GM10248 (cell line): ENCODE measurements at regions of chr9 and their contacts with region 1.

Region 1: GRCh38 chr9:127869310-127870152 is 7.9 kb downstream of the AK1 start:
- DNase-seq: peak; percentile 94
- CTCF ChIP-seq: peak; percentile 96

Region 2: DNA sequence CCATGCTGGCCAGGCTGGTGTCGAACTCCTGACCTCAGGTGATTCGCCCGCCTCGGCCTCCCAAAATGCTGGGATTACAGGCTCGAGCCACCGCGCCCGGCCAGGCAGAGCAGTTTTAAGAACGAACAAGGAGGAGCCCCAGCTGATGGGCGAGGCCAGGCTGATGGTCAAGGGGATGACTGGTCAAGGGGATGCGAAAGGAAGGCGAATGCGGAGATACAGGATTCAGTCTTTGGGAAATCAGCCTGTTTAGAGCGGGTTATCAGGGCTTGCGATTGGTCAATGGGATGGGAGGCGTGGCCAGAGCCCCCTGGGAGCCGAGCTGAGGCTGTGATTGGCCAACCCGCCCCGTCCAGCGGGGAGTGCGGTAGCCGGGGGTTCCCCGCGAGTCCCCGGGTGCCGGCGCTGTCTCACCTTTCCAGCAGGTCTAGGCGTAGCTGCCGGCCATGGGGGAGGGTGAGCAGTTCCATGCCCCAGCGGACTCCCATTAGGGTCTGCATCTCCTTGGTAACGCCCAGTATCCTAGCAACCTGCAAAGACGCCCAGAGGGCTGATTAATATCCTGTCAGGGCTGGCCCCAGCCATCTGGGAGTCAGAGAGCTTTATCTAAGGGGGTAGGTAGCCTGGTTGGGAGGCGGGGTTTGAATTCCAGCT is 127.0 kb before region 1 on chr9:
- CTCF ChIA-PET with region 1: interaction called, 17 read pairs
- POLR2A ChIA-PET with region 1: no interaction called
- DNase-seq: no peak
- CTCF ChIP-seq: no peak

Region 3: GRCh38 chr9:127779136-127779981 is 90.2 kb before region 1 on chr9:
- CTCF ChIA-PET with region 1: interaction called, 12 read pairs
- POLR2A ChIA-PET with region 1: no interaction called
- DNase-seq: peak; percentile 64
- CTCF ChIP-seq: no peak

Region 4: DNA sequence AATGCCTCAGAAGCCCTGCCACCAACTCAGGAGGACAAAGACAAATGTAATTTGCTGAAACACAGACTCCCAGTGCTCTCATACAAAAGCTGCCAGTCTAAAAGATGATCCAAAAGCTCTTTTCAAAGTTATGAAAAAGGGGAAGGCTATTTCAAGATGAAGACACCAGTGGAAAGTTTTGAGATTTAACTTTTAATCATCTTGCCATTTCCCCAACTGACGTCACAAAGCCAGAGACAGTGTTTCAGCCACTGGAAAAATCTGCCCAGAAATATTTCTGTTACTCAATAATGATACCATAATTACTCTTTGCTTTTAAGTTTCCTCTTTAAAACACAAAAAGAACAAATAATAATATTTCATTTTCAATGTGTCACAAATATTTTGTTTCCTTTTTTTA is 36.0 kb before region 1 on chr9:
- CTCF ChIA-PET with region 1: interaction called, 13 read pairs
- POLR2A ChIA-PET with region 1: no interaction called
- DNase-seq: no peak
- CTCF ChIP-seq: no peak

Region 5: DNA sequence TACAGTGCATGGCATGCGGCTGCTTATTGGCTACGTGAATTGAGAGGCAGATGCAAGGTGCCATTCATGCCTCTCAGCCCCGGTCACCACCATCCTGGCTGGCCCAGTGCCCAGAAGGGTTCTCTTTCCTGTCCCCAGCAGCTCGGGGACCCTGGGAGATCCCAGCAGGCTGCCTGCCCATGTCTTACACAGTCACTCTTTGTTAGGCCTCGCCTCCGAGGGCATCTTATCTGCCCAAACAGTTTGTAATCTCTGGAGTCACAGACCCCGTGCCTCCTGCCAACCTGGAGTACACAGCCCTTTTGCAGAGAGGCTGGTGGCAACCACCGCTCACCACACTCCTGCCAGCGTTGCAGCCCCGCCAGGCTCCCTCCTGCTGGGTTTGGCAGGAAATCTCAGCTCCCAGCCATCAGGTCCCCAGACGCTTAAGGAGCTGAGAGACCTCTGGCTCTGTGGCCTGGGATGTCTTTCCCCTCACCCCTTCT is 14.9 kb after region 1 on chr9:
- CTCF ChIA-PET with region 1: interaction called, 27 read pairs
- POLR2A ChIA-PET with region 1: interaction called, 4 read pairs
- DNase-seq: no peak
- CTCF ChIP-seq: no peak